Activated B cell treated with CpG ODN at 0.5 μM for 24 hours (primary cell): ENCODE measurements at regions of chr12 and their contacts with region 1.

Region 1: DNA sequence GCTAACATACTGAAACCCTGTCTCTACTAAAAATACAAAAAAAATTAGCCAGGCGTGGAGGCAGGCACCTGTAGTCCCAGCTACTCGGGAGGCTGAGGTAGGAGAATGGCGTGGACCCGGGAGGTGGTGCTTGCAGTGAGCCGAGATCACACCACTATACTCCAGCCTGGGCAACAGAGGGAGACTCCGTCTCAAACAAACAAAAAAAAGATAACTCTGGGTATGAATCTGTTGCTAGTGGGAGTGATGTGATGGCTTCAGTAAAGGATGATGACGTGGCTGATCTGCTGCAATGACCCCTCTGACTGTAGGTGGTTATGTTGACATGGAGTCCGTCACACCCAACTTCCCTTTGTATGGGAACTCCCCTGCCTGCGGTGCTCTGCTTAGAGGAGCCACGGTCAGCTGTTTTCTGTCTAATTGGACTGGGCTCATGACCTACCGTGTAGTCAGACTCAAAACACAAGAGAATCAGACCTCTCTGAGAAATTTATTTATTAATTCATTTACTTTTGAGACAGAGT is 59.1 kb upstream of the MED13L start:
- DNase-seq: peak; percentile 51
- ATAC-seq: peak; percentile 88
- H3K4me3 Mint-ChIP-seq: peak overlapping the region; percentile 73
- H3K27ac Mint-ChIP-seq: peak overlapping the region; percentile 97
- H3K4me1 Mint-ChIP-seq: peaks cover 79% of the 10 kb centered on the region
- H3K27me3 Mint-ChIP-seq: no peaks in the 10 kb centered on the region
- CTCF ChIP-seq: no peak

Region 2: GRCh38 chr12:116319898-116320621 is 16.5 kb before region 1 on chr12:
- CTCF ChIA-PET with region 1: no interaction called
- POLR2A ChIA-PET with region 1: interaction called, 30 read pairs
- intact Hi-C with region 1: loop called (anchors 1 kb)
- DNase-seq: no peak
- ATAC-seq: peak; percentile 29
- H3K4me3 Mint-ChIP-seq: peak overlapping the region; percentile 64
- H3K27ac Mint-ChIP-seq: peak overlapping the region; percentile 74
- H3K4me1 Mint-ChIP-seq: peaks cover 34% of the 10 kb centered on the region
- H3K27me3 Mint-ChIP-seq: no peaks in the 10 kb centered on the region
- CTCF ChIP-seq: no peak

Region 3: DNA sequence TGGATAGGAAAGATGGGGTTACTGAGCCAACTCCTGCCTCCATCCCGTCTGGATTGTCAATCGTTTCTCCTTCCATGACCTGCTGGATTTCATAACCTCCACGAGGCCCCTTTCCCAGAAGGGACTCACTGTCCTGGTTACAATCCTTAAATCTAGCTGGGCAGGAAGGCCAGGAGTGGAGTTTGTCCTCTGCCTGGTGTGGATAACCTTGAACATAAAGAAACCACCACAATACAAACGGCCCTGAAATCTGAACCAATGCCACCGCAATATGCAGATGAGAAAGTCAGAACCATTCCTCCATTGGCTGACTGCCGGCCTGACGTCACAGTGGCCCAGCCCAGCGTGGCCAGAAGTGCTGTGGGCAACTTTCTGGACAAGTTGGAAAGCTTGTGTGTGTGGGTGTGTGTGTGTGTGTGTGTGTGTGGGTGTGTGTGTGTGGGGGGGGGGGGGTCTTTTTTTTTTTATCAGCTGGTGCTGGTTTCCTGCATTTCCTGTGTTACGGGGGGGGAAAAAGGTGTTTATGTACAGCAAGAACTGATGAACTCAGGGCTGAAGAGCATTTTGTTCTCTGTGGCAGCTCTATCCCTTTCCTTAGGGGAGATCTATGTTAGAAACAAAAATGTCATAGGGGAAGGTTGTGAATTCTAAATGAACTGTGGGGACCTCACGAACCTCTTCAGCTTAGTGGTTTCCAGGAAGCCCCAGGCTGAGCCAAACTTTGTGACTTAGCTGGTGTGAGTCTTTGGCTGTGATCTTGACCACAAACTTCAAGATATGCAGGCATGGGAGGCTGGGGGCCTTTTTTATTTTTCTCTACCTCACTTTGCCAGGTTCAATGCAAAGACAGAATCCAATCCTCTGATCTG is 22.5 kb after region 1 on chr12:
- CTCF ChIA-PET with region 1: interaction called, 4 read pairs
- POLR2A ChIA-PET with region 1: interaction called, 3 read pairs
- intact Hi-C with region 1: loop called (anchors 1 kb)
- DNase-seq: peak; percentile 64
- ATAC-seq: peak; percentile 96
- H3K4me3 Mint-ChIP-seq: peak overlapping the region; percentile 65
- H3K27ac Mint-ChIP-seq: peak overlapping the region; percentile 76
- H3K4me1 Mint-ChIP-seq: peaks cover 27% of the 10 kb centered on the region
- H3K27me3 Mint-ChIP-seq: no peaks in the 10 kb centered on the region
- CTCF ChIP-seq: no peak

Region 4: DNA sequence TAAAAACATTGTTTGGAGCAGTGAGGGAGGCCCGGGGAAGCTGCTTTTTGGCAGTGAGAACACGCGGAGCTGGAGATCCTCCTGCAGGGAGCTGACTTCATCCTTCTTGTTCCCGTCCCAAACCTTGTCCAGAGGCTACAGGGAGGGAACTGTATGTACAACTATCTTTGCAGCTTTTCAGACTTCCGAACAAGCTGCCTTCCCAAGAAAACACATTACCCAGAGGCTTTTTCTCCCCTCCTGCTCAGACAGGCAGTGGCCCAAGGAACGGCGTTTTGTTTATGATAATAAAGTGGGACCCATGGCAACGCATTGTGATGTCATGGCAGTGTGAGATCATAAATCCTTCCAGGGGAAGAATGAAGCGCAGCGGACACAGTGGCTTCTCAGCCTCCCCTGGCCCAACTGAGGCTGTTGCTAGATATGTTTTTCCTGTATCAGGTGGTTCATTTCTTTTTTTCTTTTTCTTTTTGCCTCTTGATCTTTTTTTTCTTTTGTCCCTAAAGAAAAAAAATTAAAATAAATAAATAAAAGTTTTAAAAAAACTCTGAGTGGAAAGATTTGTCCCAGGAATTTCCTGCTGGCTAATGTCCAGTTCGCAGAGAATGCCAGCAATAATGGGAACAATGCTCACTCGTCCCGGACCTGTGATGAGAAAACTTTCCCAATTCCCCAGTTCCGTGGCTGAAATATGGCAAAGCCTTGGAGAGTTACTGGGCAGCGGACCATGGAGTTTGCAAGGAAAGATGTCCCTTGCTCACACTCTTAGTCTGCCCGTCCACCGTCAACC is 119.1 kb after region 1 on chr12:
- CTCF ChIA-PET with region 1: no interaction called
- POLR2A ChIA-PET with region 1: interaction called, 3 read pairs
- intact Hi-C with region 1: loop called (anchors 2 kb)
- DNase-seq: no peak
- ATAC-seq: no peak
- H3K4me3 Mint-ChIP-seq: no peak overlapping the region
- H3K27ac Mint-ChIP-seq: no peak overlapping the region
- H3K4me1 Mint-ChIP-seq: peaks cover 38% of the 10 kb centered on the region
- H3K27me3 Mint-ChIP-seq: no peaks in the 10 kb centered on the region
- CTCF ChIP-seq: no peak

Region 5: DNA sequence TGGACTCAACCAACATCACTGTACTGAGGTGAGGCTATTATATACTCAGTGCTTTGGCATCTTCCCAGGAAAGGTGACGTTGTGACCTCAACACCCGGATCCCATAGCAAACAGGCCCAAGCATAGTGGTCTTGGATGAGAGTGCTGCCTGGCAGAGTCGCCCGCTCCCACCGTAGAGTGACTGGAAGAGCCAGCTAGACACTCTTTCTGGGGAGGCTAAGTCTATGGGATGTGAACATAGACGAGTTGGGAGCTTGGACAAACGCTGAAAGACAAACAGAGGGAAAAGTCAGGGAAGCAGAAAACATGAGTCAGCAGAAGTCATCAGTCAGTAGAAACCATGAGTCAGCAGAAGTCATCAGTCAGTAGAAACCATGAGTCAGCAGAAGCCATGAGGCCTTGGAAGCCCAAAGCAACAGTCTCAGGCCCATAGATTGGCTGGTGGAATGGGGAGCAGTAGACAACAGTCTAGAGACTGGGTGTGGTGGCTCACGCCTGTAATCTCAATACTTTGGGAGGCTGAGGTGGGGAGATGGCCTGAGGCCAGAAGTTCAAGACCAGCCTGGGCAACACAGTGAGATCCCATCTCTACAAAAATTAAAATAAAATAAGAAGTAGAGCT is 156.2 kb after region 1 on chr12:
- CTCF ChIA-PET with region 1: no interaction called
- POLR2A ChIA-PET with region 1: no interaction called
- intact Hi-C with region 1: no loop called
- DNase-seq: no peak
- ATAC-seq: no peak
- H3K4me3 Mint-ChIP-seq: no peak overlapping the region
- H3K27ac Mint-ChIP-seq: no peak overlapping the region
- H3K4me1 Mint-ChIP-seq: no peaks in the 10 kb centered on the region
- H3K27me3 Mint-ChIP-seq: no peaks in the 10 kb centered on the region
- CTCF ChIP-seq: no peak

Region 6: DNA sequence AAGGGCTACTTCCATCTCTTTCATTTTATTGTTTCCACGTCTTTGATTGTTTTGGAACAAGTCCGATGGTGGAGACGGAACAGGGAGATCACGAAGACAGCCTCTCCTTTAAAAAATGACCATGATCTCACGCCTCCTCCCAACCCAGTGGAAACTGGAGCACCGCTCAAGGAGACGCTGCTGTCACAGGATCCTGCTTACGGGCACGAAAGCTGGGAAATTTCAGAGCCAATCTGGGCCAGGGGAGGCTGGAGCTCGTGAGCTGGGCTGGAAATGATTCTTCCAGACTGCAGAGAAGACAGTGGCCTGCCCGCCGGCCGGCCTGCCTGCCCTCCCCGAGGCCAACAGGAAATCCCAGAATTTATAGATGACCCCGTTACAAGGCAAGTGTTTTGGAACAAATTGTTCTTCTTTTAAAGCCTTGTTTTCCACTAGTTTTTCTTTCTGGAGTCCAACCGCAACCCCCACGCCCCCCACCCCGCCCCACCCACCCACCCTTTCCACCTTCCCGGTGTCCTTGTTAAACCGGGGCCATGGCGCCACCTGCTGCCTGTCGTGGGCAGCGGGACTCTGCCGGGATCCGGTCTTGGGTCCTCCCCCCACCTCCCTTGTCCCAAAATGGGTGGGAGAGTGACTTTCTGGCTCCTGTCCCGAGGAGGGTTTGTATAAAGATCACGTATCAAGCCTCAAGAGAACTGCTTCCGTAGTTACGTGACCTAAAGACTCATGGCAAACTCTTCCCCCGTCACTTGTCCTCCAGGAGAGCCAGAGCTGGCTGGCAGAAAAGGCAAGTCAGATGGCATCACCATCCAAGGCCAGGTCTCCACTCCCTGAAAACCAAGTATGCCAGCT is 262.9 kb after region 1 on chr12:
- CTCF ChIA-PET with region 1: interaction called, 13 read pairs
- POLR2A ChIA-PET with region 1: no interaction called
- intact Hi-C with region 1: loop called (anchors 1 kb)
- DNase-seq: peak; percentile 62
- ATAC-seq: peak; percentile 86
- H3K4me3 Mint-ChIP-seq: peak overlapping the region; percentile 45
- H3K27ac Mint-ChIP-seq: peak overlapping the region; percentile 18
- H3K4me1 Mint-ChIP-seq: peaks cover 28% of the 10 kb centered on the region
- H3K27me3 Mint-ChIP-seq: no peaks in the 10 kb centered on the region
- CTCF ChIP-seq: peak; percentile 35

Region 7: DNA sequence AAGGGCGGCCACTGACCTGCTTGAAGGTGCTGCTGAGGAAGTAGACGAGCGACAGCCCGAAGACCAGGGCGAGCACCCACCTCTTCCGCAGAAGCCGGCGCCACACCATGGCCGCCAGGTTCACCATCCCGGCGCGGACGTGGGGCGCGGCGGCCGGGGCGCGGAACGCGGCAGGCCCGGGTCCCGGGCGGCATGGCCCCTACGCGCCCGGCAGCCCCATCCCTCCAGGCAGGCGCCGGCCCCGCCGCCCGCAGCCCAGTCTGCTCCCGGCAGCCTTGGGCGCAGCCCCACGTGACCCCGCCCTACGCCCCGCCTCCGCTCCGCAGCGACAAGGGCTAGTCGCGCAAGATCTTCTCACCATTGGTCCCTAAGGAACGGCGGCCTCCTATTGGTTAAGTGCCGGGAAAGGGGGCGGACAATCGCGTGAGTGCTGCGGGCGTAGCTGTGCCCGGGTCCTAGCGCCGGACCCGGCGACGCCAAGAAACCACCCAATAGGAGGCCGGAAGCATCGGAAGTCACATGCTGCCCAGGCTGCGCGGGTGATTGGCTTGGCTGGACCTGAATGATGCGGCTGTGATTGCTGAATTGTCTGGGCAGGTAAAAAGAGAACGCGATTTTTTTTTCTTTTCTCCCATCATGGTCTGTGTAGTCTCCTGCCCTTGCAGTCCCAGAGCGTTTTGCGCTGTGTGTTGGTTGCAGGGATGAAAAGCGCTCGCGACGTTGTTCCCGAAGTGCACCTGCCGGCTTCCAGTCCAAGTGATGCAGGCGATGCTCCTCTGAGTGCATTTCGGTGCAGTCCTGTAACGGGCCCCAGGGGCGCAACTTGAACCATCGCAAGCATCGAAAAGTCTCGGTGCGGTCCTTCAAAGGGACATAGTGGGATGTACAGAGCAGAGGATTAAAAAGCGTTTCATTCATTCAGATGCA is 401.4 kb after region 1 on chr12 and contains the starts of genes RNFT2 and SPRING1:
- CTCF ChIA-PET with region 1: no interaction called
- POLR2A ChIA-PET with region 1: no interaction called
- intact Hi-C with region 1: loop called (anchors 1 kb)
- DNase-seq: peak; percentile 97
- ATAC-seq: peak; percentile 97
- H3K4me3 Mint-ChIP-seq: peak within 1 kb of the TSS; percentile 99
- H3K27ac Mint-ChIP-seq: peak within 1 kb of the TSS; percentile 90
- H3K4me1 Mint-ChIP-seq: peaks cover 31% of the 10 kb centered on the region
- H3K27me3 Mint-ChIP-seq: no peaks in the 10 kb centered on the region
- CTCF ChIP-seq: no peak
- total RNA-seq, gene RNFT2: 7.5 and 8.7 TPM in 2 replicates
- total RNA-seq, gene SPRING1: 31.6 and 36.4 TPM in 2 replicates